ENCODE measurements at regions of chr18 and their contacts with region 1.

Region 1: DNA sequence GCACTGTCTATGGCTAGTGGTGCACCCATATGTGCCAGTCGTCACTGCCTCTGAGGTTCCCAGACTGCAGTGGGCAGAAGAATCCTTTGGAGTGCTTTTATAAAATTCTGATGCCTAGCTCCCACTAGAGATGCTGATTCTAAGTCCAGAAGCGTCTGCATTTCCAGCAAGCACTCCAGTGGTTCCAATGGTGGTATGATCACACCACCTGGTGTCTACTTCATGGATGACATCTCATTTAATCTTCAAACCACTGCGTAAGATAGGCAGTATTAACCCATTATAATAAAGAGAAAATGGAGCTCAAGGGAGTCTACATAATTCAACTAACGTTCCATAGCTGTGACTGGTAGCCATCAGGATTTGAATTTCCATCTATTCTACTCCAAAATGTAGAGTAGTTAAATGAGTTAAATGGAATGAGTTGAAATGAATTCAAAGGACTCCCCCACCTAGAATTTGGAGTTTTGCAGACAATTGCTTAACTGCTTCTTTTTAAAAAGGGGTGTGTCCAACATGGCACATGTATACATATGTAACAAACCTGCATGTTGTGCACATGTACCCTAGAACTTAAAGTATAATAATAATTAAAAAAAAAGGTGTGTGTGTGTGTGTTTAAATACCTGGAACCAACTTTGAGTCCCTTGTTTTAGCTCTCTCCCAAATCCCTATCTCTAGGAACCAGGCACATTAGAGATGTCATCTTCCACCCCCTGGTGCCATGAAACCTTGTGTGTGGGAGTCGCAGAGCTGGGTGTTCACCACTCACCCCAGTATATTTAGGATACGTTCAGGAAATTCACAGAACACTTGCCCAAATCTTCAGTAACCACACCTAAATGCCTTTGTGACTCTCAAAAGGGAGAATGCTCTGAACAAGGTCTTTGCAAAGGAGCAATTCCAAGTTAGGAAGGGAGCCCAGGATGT is 14.1 kb downstream of the LAMA3 start:
- DNase-seq: peak in 1 of 2 experiments; percentile 46
- H3K4me3 ChIP-seq: no peak overlapping the region
- H3K27ac ChIP-seq: no peak overlapping the region
- H3K4me1 ChIP-seq: no peaks in the 10 kb centered on the region
- H3K27me3 ChIP-seq: no peaks in the 10 kb centered on the region
- CTCF ChIP-seq: peak; percentile 71

Region 2: GRCh38 chr18:23268641-23269040 is 434.7 kb before region 1 on chr18:
- CTCF ChIA-PET with region 1: no interaction called
- POLR2A ChIA-PET with region 1: interaction called, 16 read pairs
- intact Hi-C with region 1: no loop called
- DNase-seq: no peak
- H3K4me3 ChIP-seq: no peak overlapping the region
- H3K27ac ChIP-seq: no peak overlapping the region
- H3K4me1 ChIP-seq: no peaks in the 10 kb centered on the region
- H3K27me3 ChIP-seq: no peaks in the 10 kb centered on the region
- CTCF ChIP-seq: no peak

Region 3: GRCh38 chr18:23515911-23516546 is 187.3 kb before region 1 on chr18:
- CTCF ChIA-PET with region 1: no interaction called
- POLR2A ChIA-PET with region 1: no interaction called
- intact Hi-C with region 1: loop called (anchors 1 kb)
- DNase-seq: peak; percentile 48 to 58
- H3K4me3 ChIP-seq: no peak overlapping the region
- H3K27ac ChIP-seq: no peak overlapping the region
- H3K4me1 ChIP-seq: no peaks in the 10 kb centered on the region
- H3K27me3 ChIP-seq: no peaks in the 10 kb centered on the region
- CTCF ChIP-seq: peak; percentile 80

Region 4: GRCh38 chr18:23619388-23619881 is 83.9 kb before region 1 on chr18:
- CTCF ChIA-PET with region 1: interaction called, 9 read pairs
- POLR2A ChIA-PET with region 1: no interaction called
- intact Hi-C with region 1: loop called (anchors 1 kb)
- DNase-seq: no peak
- H3K4me3 ChIP-seq: no peak overlapping the region
- H3K27ac ChIP-seq: no peak overlapping the region
- H3K4me1 ChIP-seq: no peaks in the 10 kb centered on the region
- H3K27me3 ChIP-seq: no peaks in the 10 kb centered on the region
- CTCF ChIP-seq: no peak

Region 5: GRCh38 chr18:23684515-23685197 is 18.7 kb before region 1 on chr18:
- CTCF ChIA-PET with region 1: no interaction called
- POLR2A ChIA-PET with region 1: no interaction called
- intact Hi-C with region 1: no loop called
- DNase-seq: no peak
- H3K4me3 ChIP-seq: no peak overlapping the region
- H3K27ac ChIP-seq: no peak overlapping the region
- H3K4me1 ChIP-seq: peaks cover 9% of the 10 kb centered on the region; the same call in 1 of the 2 replicates
- H3K27me3 ChIP-seq: no peaks in the 10 kb centered on the region
- CTCF ChIP-seq: no peak

Region 6: DNA sequence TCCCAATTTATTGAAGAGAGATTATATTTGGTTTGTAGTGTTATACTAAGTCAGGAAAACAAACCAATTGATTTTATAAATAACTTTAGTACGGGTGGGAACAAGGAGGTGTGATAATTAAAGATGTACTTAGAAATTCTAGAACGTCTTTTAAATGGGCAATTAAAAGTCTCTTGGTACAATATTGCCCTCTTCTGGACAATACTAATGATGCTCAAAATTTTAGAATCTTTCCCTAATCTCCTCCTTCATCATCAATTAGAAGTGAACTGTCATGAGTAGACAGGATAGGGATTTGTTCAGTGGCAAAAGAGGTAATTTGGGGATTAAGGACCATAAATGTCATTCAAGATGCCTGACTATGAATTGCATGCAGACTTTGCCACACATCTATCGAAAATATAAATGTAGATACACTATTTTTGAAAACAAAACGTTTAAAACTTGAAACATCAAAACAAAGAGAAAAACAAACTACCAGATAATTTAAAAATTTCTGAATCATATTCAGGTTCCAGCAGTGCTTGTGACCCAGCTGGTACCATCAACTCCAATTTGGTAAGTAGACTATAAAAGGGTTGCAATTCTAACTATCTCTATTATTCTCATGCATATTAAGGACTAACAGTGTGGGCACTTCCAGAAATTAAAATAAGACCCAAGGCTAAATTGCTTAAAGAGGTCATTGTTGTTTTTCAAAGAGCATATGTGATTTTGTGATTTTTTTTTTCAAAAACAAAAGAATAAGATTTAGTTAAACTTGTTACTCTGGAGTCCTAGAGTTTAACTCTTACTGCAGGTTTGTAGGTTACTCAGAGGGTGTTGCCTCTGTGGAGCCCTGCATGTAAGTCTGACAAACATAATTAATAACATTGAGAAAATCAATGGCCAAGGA is 109.5 kb after region 1 on chr18:
- CTCF ChIA-PET with region 1: no interaction called
- POLR2A ChIA-PET with region 1: no interaction called
- intact Hi-C with region 1: loop called (anchors 5 kb)
- DNase-seq: no peak
- H3K4me3 ChIP-seq: no peak overlapping the region
- H3K27ac ChIP-seq: no peak overlapping the region
- H3K4me1 ChIP-seq: no peaks in the 10 kb centered on the region
- H3K27me3 ChIP-seq: no peaks in the 10 kb centered on the region
- CTCF ChIP-seq: peak; percentile 64